ENCODE measurements at regions of chr4 and their contacts with region 1.

Region 1: DNA sequence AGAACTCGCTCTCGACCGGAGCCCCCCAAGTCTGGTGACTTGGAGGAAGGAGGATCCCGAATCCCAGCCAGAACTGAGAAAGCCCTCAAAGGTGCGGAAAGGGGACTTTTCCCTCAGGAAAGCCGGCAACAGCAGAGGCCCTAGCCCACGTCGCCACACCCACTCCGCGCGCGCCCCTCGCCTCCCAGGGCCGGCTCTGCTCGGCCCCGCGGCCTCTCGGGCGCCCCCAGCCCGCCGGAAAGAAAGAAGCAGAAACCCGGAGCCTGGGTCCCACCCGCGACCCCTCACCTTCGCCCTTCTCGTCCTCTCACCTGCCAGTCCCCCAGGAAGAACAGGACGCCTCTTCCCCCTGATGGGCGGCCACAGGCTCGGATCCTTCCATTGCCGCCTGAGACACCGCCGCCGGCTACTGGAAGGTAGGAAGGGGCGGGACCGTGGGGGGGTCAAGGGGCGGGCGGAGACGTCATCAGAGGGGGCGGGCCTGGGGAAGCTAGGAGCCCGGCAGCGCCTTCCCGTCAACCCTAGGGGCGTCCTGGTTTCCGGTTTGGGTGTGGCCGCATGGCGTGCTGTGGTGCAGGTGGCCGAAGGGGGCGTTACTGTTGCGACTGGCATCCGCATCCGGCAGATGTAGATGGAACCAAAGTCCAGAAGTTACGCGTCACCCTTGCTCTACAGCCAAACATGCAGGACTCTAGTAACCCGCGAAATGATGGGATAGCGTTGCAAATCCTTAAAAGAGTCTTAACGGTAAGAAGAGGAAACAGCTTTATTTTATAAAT is at the start of gene UBA6:
- DNase-seq: peak; percentile 93
- ATAC-seq: peak; percentile 97
- H3K4me3 ChIP-seq: peak within 1 kb of the TSS; percentile 92 to 94
- H3K27ac ChIP-seq: peak within 1 kb of the TSS; percentile 64
- H3K4me1 ChIP-seq: peaks cover 7 to 15% of the 10 kb centered on the region in 2 experiments
- H3K27me3 ChIP-seq: no peaks in the 10 kb centered on the region
- CTCF ChIP-seq: peak; percentile 4 to 31 (median 27); a peak in 4 of 6 replicates
- POLR2A ChIP-seq: peak; percentile 89
- RAD21 ChIP-seq: no peak
- total RNA-seq, gene UBA6: 98.9 TPM

Region 2: DNA sequence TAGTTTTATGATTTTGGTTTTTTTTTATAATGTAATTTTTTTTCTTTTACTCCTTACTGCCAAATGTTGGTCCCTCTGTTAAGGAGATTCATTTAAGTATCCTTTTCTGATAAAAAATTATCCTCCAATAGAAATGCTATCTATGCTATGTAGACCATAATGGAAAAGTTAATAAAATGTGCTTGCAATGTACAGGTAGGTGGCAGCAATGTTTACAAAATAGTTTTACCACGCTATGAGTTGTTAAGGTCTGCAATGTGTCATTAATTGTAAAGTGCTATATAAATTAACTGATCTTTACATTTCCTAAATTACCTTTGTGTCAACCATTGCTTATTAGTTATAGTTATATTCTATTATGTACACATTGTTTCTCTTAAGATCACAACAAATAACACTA is 151.8 kb before region 1 on chr4:
- CTCF ChIA-PET with region 1: no interaction called
- POLR2A ChIA-PET with region 1: no interaction called
- RAD21 ChIA-PET with region 1: no interaction called
- intact Hi-C with region 1: loop called (anchors 2 kb)
- DNase-seq: no peak
- ATAC-seq: peak; percentile 21; the same call in 1 of the 2 replicates
- H3K4me3 ChIP-seq: no peak overlapping the region
- H3K27ac ChIP-seq: no peak overlapping the region
- H3K4me1 ChIP-seq: peaks cover 3 to 9% of the 10 kb centered on the region in 2 experiments; a peak in 3 of 4 replicates
- H3K27me3 ChIP-seq: no peaks in the 10 kb centered on the region
- CTCF ChIP-seq: peak; percentile 40 to 54 (median 48); a peak in 5 of 6 replicates
- POLR2A ChIP-seq: no peak
- RAD21 ChIP-seq: peak; percentile 72

Region 3: GRCh38 chr4:67714248-67714583 is 13.3 kb after region 1 on chr4:
- CTCF ChIA-PET with region 1: interaction called, 4 read pairs
- POLR2A ChIA-PET with region 1: interaction called, 12 read pairs
- RAD21 ChIA-PET with region 1: no interaction called
- intact Hi-C with region 1: no loop called
- DNase-seq: no peak
- ATAC-seq: no peak
- H3K4me3 ChIP-seq: no peak overlapping the region
- H3K27ac ChIP-seq: no peak overlapping the region
- H3K4me1 ChIP-seq: peaks cover 0 to 34% of the 10 kb centered on the region in 2 experiments; a peak in 2 of 4 replicates
- H3K27me3 ChIP-seq: no peaks in the 10 kb centered on the region
- CTCF ChIP-seq: no peak
- POLR2A ChIP-seq: no peak
- RAD21 ChIP-seq: no peak

Region 4: DNA sequence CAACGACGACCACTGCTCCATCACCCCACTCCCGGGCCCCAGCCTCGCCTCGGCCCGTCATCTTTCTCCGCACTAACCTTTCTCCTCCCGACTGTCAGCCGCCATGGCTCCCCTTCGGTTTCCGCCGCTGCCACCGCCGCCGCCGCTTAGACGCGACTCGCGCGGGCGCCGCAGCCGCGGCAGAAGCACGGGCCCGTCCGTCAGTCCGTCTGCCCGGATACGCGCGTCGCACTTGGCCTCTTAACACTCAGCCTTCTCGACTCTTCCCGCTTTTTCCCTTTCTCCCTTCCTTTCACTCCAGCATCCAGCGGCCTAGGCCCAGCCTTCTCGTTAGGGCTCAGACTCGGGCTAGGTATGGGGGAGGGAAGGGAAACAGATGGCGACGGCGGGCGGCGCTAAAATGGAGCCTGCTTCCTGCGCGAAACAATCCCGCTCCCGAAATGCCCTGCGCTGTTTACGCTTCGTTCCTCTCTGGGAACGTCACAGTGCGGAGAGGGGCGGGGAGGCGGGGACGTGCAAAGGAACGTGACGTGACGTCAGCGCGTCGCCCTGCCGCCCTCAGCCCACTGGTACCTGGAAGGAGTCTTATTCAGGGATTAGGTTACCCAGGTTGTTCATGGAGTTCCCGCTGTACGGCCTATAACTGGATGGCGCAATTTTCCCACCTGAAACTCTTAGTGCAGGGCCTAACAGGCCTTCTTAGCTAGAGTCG is 648.9 kb after region 1 on chr4 and contains the start of gene YTHDC1:
- CTCF ChIA-PET with region 1: no interaction called
- POLR2A ChIA-PET with region 1: no interaction called
- RAD21 ChIA-PET with region 1: no interaction called
- intact Hi-C with region 1: loop called (anchors 5 kb)
- DNase-seq: peak; percentile 91
- ATAC-seq: peak; percentile 99
- H3K4me3 ChIP-seq: peak within 1 kb of the TSS; percentile 82 to 96
- H3K27ac ChIP-seq: peak within 1 kb of the TSS; percentile 89
- H3K4me1 ChIP-seq: peaks cover 4 to 20% of the 10 kb centered on the region in 2 experiments; a peak in 3 of 4 replicates
- H3K27me3 ChIP-seq: no peaks in the 10 kb centered on the region
- CTCF ChIP-seq: no peak
- POLR2A ChIP-seq: peak; percentile 74
- RAD21 ChIP-seq: no peak
- total RNA-seq, gene YTHDC1: 68.9 TPM